ENCODE measurements at regions of chr19 and their contacts with region 1.

Region 1: DNA sequence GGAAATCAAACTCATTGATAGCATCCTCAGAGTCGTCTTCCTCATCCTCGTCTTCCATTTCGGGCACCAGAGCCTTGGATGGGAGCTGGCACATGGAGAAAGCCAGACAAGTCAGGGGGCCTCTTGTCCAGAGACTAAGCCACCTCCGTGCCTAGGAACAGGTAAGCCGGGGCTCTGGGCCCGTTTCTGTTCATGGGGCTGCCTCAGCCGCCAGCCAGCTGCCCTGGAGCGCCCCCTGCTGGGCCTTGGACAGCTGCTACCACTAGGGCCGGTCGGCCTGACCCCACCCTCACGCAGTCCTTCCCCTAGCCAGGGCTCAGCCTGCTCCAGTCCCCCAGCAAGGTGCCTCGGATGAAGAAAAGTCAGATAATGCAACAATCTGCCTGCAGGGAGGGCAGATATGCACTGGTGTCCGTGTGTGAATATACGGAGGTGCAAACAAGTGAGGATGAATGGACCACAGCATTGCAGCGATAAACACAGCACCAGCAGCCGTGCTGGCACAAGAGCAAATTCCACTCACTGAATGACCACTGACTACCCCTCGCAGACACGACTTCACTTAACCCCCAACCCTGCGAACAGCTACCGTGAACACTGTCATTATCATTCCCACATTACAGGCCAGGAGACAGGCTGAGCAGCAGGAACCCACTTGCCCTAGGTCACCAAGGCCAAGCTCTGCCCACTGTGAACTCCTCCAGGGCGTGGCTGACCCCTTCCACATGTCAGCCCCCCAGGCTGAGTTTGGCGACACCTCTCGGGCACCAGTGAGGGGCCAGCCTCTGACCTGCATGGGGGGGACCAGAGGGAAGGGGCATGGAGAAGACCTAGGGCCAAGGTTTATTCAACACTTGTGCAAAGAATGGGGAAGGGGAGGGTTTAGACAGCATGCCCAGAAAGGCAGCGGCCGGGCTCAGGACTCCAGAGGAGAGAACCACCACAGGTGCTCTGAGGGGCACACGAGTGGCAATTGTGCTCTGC is 12.1 kb upstream of the PRKD2 start:
- DNase-seq: peak; percentile 86 to 90
- ATAC-seq: peak; percentile 85 to 93 (median 88)
- H3K4me3 ChIP-seq: no peak overlapping the region
- H3K4me3 Mint-ChIP-seq: peak overlapping the region; percentile 13
- H3K27ac ChIP-seq: no peak overlapping the region
- H3K27ac Mint-ChIP-seq: no peak overlapping the region
- H3K4me1 ChIP-seq: peaks cover 35% of the 10 kb centered on the region
- H3K4me1 Mint-ChIP-seq: peaks cover 12 to 44% of the 10 kb centered on the region in 2 donors
- H3K27me3 ChIP-seq: no peaks in the 10 kb centered on the region
- H3K27me3 Mint-ChIP-seq: no peaks in the 10 kb centered on the region
- CTCF ChIP-seq: peak; percentile 87

Region 2: DNA sequence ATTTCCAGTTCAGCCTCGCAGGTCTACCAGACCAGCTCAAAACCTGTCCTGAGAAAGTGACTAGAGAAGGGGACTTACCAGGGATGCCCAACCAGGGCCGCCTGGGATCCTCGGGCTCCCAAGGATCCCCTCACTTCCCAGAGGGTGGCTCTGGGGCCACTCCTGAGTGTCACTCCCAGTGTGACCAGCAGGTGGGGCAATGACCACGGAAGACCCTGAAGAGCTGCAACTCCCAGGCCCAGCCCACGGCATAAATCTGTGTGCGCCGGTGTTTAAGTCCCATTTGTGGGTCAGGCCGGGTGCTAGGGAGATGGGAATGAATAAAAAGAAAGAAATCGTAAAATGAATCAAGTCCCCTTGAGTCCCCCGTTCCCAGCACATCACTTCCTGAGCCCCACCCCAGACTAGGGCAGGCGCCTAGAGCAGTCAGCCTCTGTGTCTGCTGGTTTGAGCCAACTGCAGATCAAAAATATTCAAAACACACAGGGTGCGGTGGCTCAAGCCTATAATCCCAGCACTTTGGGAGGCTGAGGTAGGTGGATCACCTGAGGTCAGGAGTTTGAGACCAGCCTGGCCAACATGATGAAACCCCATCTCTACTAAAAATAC is 114.8 kb before region 1 on chr19:
- intact Hi-C with region 1: loop called (anchors 1 kb)
- DNase-seq: peak; percentile 74 to 90
- ATAC-seq: peak; percentile 86 to 92 (median 89)
- H3K4me3 ChIP-seq: no peak overlapping the region
- H3K4me3 Mint-ChIP-seq: no peak overlapping the region
- H3K27ac ChIP-seq: no peak overlapping the region
- H3K27ac Mint-ChIP-seq: no peak overlapping the region
- H3K4me1 ChIP-seq: peaks cover 52% of the 10 kb centered on the region
- H3K4me1 Mint-ChIP-seq: peaks cover 32 to 33% of the 10 kb centered on the region in 2 donors
- H3K27me3 ChIP-seq: no peaks in the 10 kb centered on the region
- H3K27me3 Mint-ChIP-seq: peaks cover 7 to 10% of the 10 kb centered on the region in 2 donors
- CTCF ChIP-seq: peak; percentile 78

Region 3: GRCh38 chr19:46704379-46705076 is 24.5 kb before region 1 on chr19:
- intact Hi-C with region 1: loop called (anchors 1 kb)
- DNase-seq: peak; percentile 87 to 89
- ATAC-seq: peak; percentile 91 to 99 (median 94)
- H3K4me3 ChIP-seq: no peak overlapping the region
- H3K4me3 Mint-ChIP-seq: no peak overlapping the region
- H3K27ac ChIP-seq: no peak overlapping the region
- H3K27ac Mint-ChIP-seq: peak overlapping the region; percentile 83 to 84
- H3K4me1 ChIP-seq: peaks cover 7% of the 10 kb centered on the region
- H3K4me1 Mint-ChIP-seq: peaks cover 12 to 23% of the 10 kb centered on the region in 2 donors
- H3K27me3 ChIP-seq: no peaks in the 10 kb centered on the region
- H3K27me3 Mint-ChIP-seq: no peaks in the 10 kb centered on the region
- CTCF ChIP-seq: peak; percentile 97

Region 4: GRCh38 chr19:46840136-46840942 is 111.4 kb after region 1 on chr19:
- intact Hi-C with region 1: no loop called
- DNase-seq: peak in 1 of 2 donors; percentile 87
- ATAC-seq: peak; percentile 81 to 99 (median 95)
- H3K4me3 ChIP-seq: no peak overlapping the region
- H3K4me3 Mint-ChIP-seq: no peak overlapping the region
- H3K27ac ChIP-seq: no peak overlapping the region
- H3K27ac Mint-ChIP-seq: no peak overlapping the region
- H3K4me1 ChIP-seq: peaks cover 6% of the 10 kb centered on the region
- H3K4me1 Mint-ChIP-seq: peaks cover 0 to 7% of the 10 kb centered on the region in 2 donors
- H3K27me3 ChIP-seq: no peaks in the 10 kb centered on the region
- H3K27me3 Mint-ChIP-seq: no peaks in the 10 kb centered on the region
- CTCF ChIP-seq: peak; percentile 75

Region 5: DNA sequence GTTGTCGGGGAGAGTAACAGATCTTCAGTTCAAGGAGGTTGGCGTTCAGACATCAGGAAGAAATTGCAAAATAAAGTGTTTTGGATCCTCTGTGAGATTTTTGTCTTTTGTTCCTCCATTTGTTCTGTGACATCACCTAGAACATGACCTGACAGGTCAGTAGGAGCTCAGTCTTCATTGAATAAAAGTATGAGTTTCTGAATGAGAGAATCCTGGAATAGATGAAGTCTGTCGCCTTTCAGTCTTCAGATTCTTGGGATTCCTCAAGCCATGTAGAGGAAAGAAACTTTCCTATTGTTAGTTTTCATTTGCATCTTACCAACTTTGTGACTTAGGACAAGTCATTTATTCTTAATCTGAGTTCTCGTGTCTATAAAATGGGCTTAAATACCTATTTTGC is 146.2 kb after region 1 on chr19:
- intact Hi-C with region 1: no loop called
- DNase-seq: no peak
- ATAC-seq: no peak
- H3K4me3 ChIP-seq: no peak overlapping the region
- H3K4me3 Mint-ChIP-seq: no peak overlapping the region
- H3K27ac ChIP-seq: no peak overlapping the region
- H3K27ac Mint-ChIP-seq: no peak overlapping the region
- H3K4me1 ChIP-seq: no peaks in the 10 kb centered on the region
- H3K4me1 Mint-ChIP-seq: peaks cover 3 to 9% of the 10 kb centered on the region in 2 donors
- H3K27me3 ChIP-seq: no peaks in the 10 kb centered on the region
- H3K27me3 Mint-ChIP-seq: no peaks in the 10 kb centered on the region
- CTCF ChIP-seq: no peak

Measured in natural killer cell (primary cell).